ENCODE measurements at regions of chr2 and their contacts with region 1.

Region 1: GRCh38 chr2:217713395-217714286 is 289.2 kb downstream of the TNS1 start:
- DNase-seq: peak in 1 of 2 donors; percentile 90
- H3K4me3 ChIP-seq: no peak overlapping the region
- H3K27ac ChIP-seq: peak overlapping the region; percentile 60 to 69
- H3K4me1 ChIP-seq: peaks cover 0 to 15% of the 10 kb centered on the region in 2 donors
- H3K27me3 ChIP-seq: no peaks in the 10 kb centered on the region
- CTCF ChIP-seq: peak; percentile 92 to 95 (median 92)

Region 2: GRCh38 chr2:216519154-216519762 is 1194.4 kb before region 1 on chr2:
- intact Hi-C with region 1: loop called (anchors 5 kb)
- DNase-seq: peak in 1 of 2 donors; percentile 90
- H3K4me3 ChIP-seq: no peak overlapping the region
- H3K27ac ChIP-seq: peak overlapping the region; percentile 40 to 52
- H3K4me1 ChIP-seq: peaks cover 0 to 10% of the 10 kb centered on the region in 2 donors
- H3K27me3 ChIP-seq: no peaks in the 10 kb centered on the region
- CTCF ChIP-seq: peak; percentile 71 to 83 (median 79)

Region 3: GRCh38 chr2:216683846-216684507 is 1029.7 kb before region 1 on chr2:
- intact Hi-C with region 1: loop called (anchors 5 kb)
- DNase-seq: peak; percentile 48 to 93
- H3K4me3 ChIP-seq: no peak overlapping the region
- H3K27ac ChIP-seq: peak overlapping the region; percentile 87 to 93
- H3K4me1 ChIP-seq: peaks cover 19 to 90% of the 10 kb centered on the region in 2 donors
- H3K27me3 ChIP-seq: no peaks in the 10 kb centered on the region
- CTCF ChIP-seq: no peak

Region 4: DNA sequence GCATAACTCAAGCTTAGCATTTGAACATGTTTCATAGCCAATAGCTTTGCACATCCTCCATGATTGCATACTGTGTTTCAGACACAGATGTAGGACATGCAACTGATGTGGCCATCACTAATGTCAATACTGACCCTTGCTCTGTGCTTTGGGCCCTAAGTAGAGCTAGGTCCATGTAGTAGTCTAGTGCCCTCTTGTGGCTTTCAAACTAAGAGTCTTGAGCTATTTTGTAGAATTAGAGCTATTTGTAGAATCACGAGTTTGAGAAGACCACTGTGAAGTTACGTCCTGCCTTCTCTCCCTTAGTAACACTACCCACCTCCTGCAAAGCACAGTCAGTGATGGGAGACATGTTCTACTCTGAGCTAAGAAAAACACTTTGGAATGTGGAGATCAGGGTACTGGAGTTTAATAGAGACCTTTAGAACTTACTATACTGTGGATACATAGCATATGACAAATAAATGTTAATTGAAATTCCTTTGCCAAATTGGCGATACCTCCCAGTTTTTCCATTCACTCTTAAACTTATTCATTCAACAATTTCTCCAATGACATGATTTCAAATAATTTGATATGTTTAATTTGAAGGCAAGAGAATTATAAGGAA is 547.3 kb before region 1 on chr2:
- intact Hi-C with region 1: loop called (anchors 10 kb)
- DNase-seq: no peak
- H3K4me3 ChIP-seq: no peak overlapping the region
- H3K27ac ChIP-seq: no peak overlapping the region
- H3K4me1 ChIP-seq: peaks cover 0 to 10% of the 10 kb centered on the region in 2 donors
- H3K27me3 ChIP-seq: no peaks in the 10 kb centered on the region
- CTCF ChIP-seq: peak; percentile 44 to 64 (median 53)

Region 5: DNA sequence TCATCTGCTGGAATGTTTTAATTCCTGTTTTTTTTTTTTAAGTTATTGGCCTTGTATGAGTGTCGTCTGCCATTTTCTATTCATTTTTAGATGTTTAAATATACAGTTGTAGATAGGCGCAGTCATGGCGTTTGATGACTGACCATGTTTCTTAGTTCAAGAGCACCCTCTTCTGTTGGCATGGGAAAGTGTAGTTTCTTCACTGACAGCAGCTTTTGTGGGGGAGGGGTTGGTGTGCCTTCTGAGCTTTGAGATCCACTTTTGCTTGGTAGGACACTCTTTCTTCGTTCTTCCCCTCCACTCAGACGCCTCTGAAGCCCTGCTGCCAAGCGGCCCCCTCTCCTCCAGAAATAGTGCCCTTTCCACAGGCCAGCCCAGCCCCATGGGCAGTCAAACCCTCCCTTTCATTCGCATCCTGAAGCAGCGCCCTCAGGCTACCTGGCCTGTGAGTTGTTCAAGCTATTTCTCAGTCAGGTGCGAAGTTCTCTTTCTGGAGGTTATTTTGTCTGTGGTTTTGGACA is 202.8 kb before region 1 on chr2:
- intact Hi-C with region 1: loop called (anchors 5 kb)
- DNase-seq: peak in 1 of 2 donors; percentile 75
- H3K4me3 ChIP-seq: no peak overlapping the region
- H3K27ac ChIP-seq: no peak overlapping the region
- H3K4me1 ChIP-seq: peaks cover 0 to 6% of the 10 kb centered on the region in 2 donors
- H3K27me3 ChIP-seq: no peaks in the 10 kb centered on the region
- CTCF ChIP-seq: peak; percentile 76 to 86 (median 79)

Region 6: DNA sequence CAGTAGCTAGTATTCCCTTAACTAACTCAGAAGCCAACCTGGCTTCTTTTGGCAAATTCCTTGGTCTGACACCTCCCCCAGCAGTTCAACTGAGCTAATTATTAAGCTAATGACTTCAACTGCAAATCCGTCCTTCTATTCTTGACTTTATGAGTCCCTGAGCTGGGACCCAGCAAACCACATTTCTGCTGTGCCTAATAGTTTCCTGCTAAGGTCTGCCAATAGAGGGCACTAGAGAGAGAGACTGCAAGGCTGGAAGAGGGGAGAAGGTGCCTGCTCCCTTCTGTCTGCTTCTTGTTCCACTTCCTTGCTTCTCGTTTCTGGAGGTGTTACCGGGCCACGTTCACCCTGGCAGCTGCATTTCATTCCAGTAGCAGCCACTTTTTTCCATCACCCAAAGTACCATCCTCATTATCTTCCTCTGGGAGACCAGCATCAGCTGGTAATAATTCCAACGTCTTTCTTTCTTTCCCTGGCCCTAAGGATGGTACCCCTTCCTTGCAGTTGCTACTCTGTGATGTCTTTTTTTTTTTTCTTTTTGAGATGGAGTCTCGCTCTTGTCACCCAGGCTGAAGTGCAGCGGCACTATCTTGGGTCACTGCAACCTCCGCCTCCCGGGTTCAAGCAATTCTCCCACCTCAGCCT is 62.8 kb before region 1 on chr2:
- intact Hi-C with region 1: loop called (anchors 1 kb)
- DNase-seq: no peak
- H3K4me3 ChIP-seq: no peak overlapping the region
- H3K27ac ChIP-seq: peak overlapping the region; percentile 51 to 94
- H3K4me1 ChIP-seq: peaks cover 5 to 29% of the 10 kb centered on the region in 2 donors
- H3K27me3 ChIP-seq: no peaks in the 10 kb centered on the region
- CTCF ChIP-seq: peak; percentile 35 to 80 (median 55)

Region 7: DNA sequence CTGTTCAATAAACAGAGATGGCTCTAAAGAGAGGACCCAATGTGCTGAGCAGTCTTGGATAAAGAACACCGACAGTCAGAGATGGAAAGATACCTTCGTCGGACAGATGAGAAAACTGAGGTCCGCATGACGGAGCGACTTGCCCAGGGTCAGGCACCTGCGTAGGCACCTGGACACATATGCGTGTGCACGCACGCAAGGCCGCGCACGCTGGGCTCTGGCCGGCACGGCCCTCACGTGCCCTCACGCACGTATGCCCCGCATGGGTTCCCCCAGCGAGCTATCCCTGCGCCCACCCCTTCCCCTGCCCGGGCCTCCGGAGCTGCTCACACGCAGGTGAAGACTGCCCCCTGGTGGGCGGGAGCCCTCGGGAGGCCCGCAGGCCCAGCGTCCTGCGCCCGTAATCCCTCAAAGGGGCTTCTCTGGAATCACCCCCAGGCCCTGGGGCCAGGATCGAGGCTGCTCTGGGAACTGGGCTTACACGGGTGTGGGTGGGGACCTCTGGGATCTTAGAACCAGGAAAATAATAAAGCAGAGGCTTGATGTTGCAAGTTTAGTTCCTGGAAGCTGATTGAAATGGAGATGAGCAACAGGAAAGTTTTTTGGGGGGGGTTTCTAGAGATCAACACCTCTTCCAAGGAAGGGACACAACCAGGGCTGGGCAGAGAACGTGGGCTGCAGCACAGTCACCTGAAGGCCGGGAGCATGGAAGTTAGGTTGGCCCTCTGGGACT is 42.9 kb after region 1 on chr2:
- intact Hi-C with region 1: loop called (anchors 2 kb)
- DNase-seq: peak in 1 of 2 donors; percentile 79
- H3K4me3 ChIP-seq: no peak overlapping the region
- H3K27ac ChIP-seq: peak overlapping the region; percentile 80 to 87
- H3K4me1 ChIP-seq: peaks cover 12 to 50% of the 10 kb centered on the region in 2 donors
- H3K27me3 ChIP-seq: no peaks in the 10 kb centered on the region
- CTCF ChIP-seq: peak; percentile 79 to 97 (median 85)

Measured in ascending aorta (tissue), 2 donors.